ENCODE measurements at regions of chr12 and their contacts with region 1.

Region 1: DNA sequence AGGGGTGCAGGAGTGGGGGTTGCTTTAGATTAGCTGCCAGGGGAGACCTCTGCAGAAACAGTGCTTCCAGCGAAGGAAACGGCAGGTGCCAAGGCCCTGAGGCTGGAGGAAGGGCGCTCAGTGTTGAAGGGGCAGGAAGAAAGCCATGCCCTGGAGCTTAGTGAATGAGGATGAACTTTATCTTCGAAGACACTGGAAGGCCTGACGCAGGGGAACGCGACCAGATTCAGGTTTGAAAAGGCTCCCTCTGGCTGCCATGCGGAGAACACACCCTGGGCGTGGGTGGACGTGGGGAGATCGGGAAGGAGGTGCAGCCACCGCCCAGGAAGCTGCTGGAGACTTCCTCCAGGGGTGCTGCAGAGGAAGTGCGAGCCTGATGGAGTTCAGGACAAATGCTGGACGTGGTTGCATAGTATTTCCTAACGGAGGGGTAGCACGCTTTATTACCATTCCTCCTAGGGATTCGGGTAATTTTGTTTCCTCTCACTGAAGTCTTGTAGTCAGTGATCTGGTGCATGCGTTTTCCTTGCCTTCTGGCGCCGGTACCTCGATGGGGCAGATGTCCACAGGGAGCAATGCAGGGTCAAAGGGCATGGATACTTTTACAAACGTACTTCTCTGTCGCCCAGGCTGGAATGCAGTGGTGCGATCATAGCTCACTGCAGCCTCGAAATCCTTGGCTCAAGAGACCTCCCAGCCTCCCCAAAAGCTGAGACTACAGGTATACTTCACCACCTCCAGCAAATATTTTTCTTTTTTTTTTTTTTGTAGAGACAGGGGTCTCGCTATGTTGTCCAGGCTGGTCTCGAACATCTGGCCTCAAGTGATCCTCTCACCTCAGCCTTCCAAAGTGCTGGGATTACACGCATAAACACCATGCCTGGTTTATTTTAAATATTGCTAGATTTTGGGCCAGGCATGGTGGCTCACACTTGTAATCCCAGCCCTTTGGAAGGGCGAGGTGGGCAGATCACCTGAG is 26.4 kb upstream of the UBC start:
- DNase-seq: peak; percentile 95
- H3K4me3 Mint-ChIP-seq: no peak overlapping the region
- H3K27ac Mint-ChIP-seq: no peak overlapping the region
- H3K4me1 Mint-ChIP-seq: peaks cover 10% of the 10 kb centered on the region
- H3K27me3 Mint-ChIP-seq: no peaks in the 10 kb centered on the region

Region 2: GRCh38 chr12:124927201-124928094 is 13.4 kb before region 1 on chr12:
- CTCF ChIA-PET with region 1: interaction called, 48 read pairs
- POLR2A ChIA-PET with region 1: interaction called, 137 read pairs
- intact Hi-C with region 1: loop called (anchors 1 kb)
- DNase-seq: peak; percentile 97
- H3K4me3 Mint-ChIP-seq: peak overlapping the region; percentile 94
- H3K27ac Mint-ChIP-seq: peak overlapping the region; percentile 96
- H3K4me1 Mint-ChIP-seq: peaks cover 32% of the 10 kb centered on the region
- H3K27me3 Mint-ChIP-seq: peaks cover 5% of the 10 kb centered on the region